IMR-90 (cell line): ENCODE measurements at regions of chr11 and their contacts with region 1.

Region 1: GRCh38 chr11:110296226-110297075 is at the start of gene RDX:
- DNase-seq: peak; percentile 63
- ATAC-seq: peak; percentile 92
- H3K4me3 ChIP-seq: peak within 1 kb of the TSS; percentile 99
- H3K27ac ChIP-seq: peak within 1 kb of the TSS; percentile 89
- H3K4me1 ChIP-seq: peaks cover 13% of the 10 kb centered on the region
- H3K27me3 ChIP-seq: no peaks in the 10 kb centered on the region
- CTCF ChIP-seq: peak; percentile 22; the same call in 1 of the 2 replicates
- POLR2A ChIP-seq: peak; percentile 76
- RAD21 ChIP-seq: no peak
- total RNA-seq, gene RDX: 61.1 and 135 TPM in 2 replicates

Region 2: GRCh38 chr11:110366291-110366690 is 69.8 kb after region 1 on chr11:
- CTCF ChIA-PET with region 1: no interaction called
- POLR2A ChIA-PET with region 1: interaction called, 3 read pairs
- dilution Hi-C with region 1: no loop called
- in situ Hi-C with region 1: no loop called
- intact Hi-C with region 1: loop called (anchors 5 kb)
- DNase-seq: peak; percentile 28
- ATAC-seq: peak; percentile 78
- H3K4me3 ChIP-seq: no peak overlapping the region
- H3K27ac ChIP-seq: no peak overlapping the region
- H3K4me1 ChIP-seq: peaks cover 4% of the 10 kb centered on the region
- H3K27me3 ChIP-seq: no peaks in the 10 kb centered on the region
- CTCF ChIP-seq: no peak
- POLR2A ChIP-seq: no peak
- RAD21 ChIP-seq: no peak

Region 3: GRCh38 chr11:110613197-110613918 is 316.9 kb after region 1 on chr11:
- CTCF ChIA-PET with region 1: no interaction called
- POLR2A ChIA-PET with region 1: no interaction called
- dilution Hi-C with region 1: no loop called
- in situ Hi-C with region 1: no loop called
- intact Hi-C with region 1: no loop called
- DNase-seq: peak; percentile 19
- ATAC-seq: no peak
- H3K4me3 ChIP-seq: no peak overlapping the region
- H3K27ac ChIP-seq: no peak overlapping the region
- H3K4me1 ChIP-seq: no peaks in the 10 kb centered on the region
- H3K27me3 ChIP-seq: no peaks in the 10 kb centered on the region
- CTCF ChIP-seq: no peak
- POLR2A ChIP-seq: no peak
- RAD21 ChIP-seq: no peak